PC-9 (cell line): ENCODE measurements at regions of chr20 and their contacts with region 1.

Region 1: DNA sequence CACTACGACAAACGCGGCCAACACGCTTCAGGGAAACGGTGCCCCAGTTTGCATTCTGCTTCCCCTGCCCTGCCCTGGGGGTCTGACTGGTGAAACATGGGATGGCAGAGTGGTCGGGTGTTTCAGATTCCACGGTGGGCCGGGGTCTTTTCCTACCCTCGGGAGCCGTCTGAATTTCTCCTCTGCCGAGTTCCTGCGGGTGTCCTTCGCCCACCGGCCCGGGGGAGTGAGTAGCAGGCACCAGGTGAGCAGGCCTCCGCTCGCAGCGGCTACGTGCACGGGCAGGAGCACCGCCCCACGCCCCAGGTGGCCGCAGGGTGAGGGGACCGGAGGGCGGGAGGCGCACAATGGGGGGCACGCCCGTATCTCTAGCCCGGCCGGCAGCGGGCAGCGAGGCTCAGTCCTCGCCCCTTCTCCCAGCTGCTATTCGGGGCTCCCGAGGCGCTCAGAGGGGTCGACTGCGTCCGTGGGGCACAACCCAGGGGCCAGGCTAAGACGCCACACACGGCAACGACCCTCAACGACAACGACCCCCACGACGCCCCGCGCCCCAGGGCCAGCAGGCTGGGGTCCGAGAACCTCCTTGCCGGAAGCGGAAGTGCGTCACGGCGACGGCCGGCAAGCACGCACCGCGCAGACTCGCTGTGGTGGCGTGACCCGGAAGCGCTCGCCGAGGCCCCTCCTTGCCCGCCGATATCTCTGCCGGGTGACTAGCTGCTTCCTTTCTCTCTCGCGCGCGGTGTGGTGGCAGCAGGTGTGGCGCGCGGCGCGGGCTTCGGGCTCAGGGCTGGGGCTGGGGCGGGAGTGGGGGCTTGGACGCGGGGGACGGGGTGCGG is at the start of gene RPS21:
- DNase-seq: peak; percentile 85 to 93
- H3K4me3 ChIP-seq: peak within 1 kb of the TSS; percentile 100
- H3K27ac ChIP-seq: peak within 1 kb of the TSS; percentile 36
- H3K4me1 ChIP-seq: peaks cover 23% of the 10 kb centered on the region
- H3K27me3 ChIP-seq: no peaks in the 10 kb centered on the region
- CTCF ChIP-seq: no peak
- total RNA-seq, gene RPS21: 2,188 and 2,275 TPM in 2 replicates

Region 2: GRCh38 chr20:62357187-62357667 is 29.4 kb before region 1 on chr20:
- CTCF ChIA-PET with region 1: interaction called, 8 read pairs
- POLR2A ChIA-PET with region 1: interaction called, 13 read pairs
- intact Hi-C with region 1: loop called (anchors 2 kb)
- DNase-seq: peak; percentile 74 to 96
- H3K4me3 ChIP-seq: peak overlapping the region; percentile 55
- H3K27ac ChIP-seq: peak overlapping the region; percentile 86
- H3K4me1 ChIP-seq: peaks cover 92% of the 10 kb centered on the region
- H3K27me3 ChIP-seq: no peaks in the 10 kb centered on the region
- CTCF ChIP-seq: no peak

Region 3: DNA sequence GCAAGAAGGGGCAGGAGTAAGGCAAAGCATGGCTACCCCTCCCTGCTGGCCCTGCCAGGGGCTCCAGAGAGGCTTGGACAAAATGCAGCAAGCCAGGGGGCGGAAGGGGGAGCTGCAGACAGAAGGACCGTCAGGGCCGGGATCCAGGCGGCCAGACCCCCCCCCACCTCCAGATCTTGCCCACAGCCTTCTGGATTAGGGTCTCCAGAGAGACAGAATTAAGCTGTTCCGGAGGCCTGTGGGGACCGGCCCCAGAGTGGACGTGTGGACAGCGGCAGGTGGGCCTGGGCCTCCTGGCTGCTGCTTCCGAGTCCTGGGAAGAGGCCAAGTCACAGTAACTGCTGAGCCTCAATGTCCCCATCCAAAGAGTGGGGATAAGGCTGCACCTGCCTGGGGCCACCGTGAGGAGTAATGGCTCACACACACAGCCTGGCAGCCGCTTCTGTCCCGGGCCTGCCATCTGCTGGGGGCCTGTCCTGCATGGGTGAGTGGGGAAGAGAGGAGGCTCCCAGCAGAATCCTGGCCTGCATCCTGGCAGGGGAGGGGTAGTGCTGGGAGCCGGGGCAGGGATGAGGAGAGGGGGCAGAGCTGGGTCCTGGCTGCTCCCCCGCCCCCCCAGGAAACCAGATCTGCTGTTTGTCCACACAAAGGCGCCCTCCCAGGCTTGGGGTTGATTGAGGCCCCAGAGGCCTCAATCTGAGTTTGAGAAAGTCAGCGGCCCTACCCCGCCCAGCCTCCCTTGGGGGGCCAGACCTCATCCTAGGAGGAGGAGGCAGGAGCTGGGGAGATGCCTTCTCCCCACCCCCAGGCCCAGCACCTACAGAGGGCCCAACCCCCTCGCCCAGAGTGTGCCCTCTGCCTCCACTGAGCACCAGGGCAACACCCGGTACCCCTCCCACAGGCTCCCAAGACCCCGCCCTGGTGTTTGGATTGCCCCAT is 23.4 kb before region 1 on chr20:
- CTCF ChIA-PET with region 1: interaction called, 10 read pairs
- POLR2A ChIA-PET with region 1: interaction called, 13 read pairs
- intact Hi-C with region 1: loop called (anchors 2 kb)
- DNase-seq: peak in 1 of 2 experiments; percentile 62
- H3K4me3 ChIP-seq: peak overlapping the region; percentile 78
- H3K27ac ChIP-seq: peak overlapping the region; percentile 92
- H3K4me1 ChIP-seq: peaks cover 62% of the 10 kb centered on the region
- H3K27me3 ChIP-seq: no peaks in the 10 kb centered on the region
- CTCF ChIP-seq: no peak

Region 4: GRCh38 chr20:62368976-62369814 is 17.4 kb before region 1 on chr20:
- CTCF ChIA-PET with region 1: interaction called, 10 read pairs
- POLR2A ChIA-PET with region 1: interaction called, 13 read pairs
- intact Hi-C with region 1: no loop called
- DNase-seq: peak; percentile 53 to 79
- H3K4me3 ChIP-seq: peak overlapping the region; percentile 58; the same call in 1 of the 2 replicates
- H3K27ac ChIP-seq: peak overlapping the region; percentile 35; the same call in 1 of the 2 replicates
- H3K4me1 ChIP-seq: peaks cover 44% of the 10 kb centered on the region
- H3K27me3 ChIP-seq: no peaks in the 10 kb centered on the region
- CTCF ChIP-seq: peak; percentile 23; the same call in 1 of the 2 replicates